Right cardiac atrium (tissue), 5 donors: ENCODE measurements at regions of chr7 and their contacts with region 1.

Region 1: DNA sequence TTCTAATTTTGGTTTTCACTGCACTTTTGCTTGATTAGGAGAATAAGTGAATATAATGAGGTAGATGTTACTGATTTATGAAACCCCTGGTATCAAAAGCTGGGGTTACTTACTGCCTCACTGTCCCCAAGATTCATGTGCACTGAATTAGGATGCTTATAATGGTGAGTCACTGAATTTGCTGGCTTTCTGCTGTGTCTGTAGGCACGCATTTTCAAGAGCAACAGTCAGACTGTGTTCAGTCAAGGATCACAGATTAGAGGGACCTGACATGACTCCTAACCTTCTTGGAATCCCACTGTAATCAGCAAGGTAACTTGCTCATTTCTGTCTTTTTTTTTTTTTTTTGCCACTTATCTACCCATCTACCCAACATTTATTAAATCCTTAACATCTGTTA is 59.7 kb downstream of the GPR85 start:
- DNase-seq: no peak
- ATAC-seq: no peak
- H3K4me3 ChIP-seq: no peak overlapping the region
- H3K27ac ChIP-seq: no peak overlapping the region
- H3K4me1 ChIP-seq: no peaks in the 10 kb centered on the region
- H3K27me3 ChIP-seq: no peaks in the 10 kb centered on the region

Region 2: DNA sequence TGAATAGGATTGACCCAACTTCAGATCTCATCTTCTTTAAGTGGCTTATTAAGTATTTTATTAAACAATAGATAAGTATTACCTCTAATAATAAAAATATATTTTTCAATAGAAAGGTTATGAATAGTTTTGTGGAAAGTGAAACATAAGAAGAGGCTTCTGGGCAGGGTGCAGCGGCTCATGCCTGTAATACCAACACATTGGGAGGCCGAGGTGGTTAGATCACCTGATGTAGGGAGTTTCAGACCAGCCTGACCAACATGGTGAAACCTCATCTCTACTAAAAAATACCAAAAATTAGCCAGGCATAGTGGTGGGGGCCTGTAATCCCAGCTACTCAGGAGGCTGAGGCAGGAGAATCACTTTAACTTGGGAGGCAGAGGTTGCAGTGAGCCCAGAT is 33.2 kb after region 1 on chr7:
- intact Hi-C with region 1: no loop called
- DNase-seq: no peak
- ATAC-seq: no peak
- H3K4me3 ChIP-seq: no peak overlapping the region
- H3K27ac ChIP-seq: no peak overlapping the region
- H3K4me1 ChIP-seq: no peaks in the 10 kb centered on the region
- H3K27me3 ChIP-seq: no peaks in the 10 kb centered on the region

Region 3: GRCh38 chr7:113118074-113118959 is 91.4 kb after region 1 on chr7 and contains the start of gene SMIM30:
- intact Hi-C with region 1: loop called in 1 of 4 experiments (anchors 10 kb)
- DNase-seq: peak; percentile 94 to 97 (median 96)
- ATAC-seq: peak; percentile 100
- H3K4me3 ChIP-seq: peak within 1 kb of the TSS; percentile 98
- H3K27ac ChIP-seq: peak within 1 kb of the TSS; percentile 51
- H3K4me1 ChIP-seq: no peaks in the 10 kb centered on the region
- H3K27me3 ChIP-seq: no peaks in the 10 kb centered on the region
- total RNA-seq, gene SMIM30: 107 to 135 (median 111) TPM